Naive thymus-derived CD4-positive, alpha-beta T cell (primary cell): ENCODE measurements at regions of chr13 and their contacts with region 1.

Region 1: GRCh38 chr13:45847554-45848224 is 3.9 kb downstream of the SIAH3 start:
- DNase-seq: peak; percentile 15 to 83 (median 78)
- ATAC-seq: peak; percentile 79
- H3K4me3 ChIP-seq: peak overlapping the region; percentile 11
- H3K4me3 Mint-ChIP-seq: peak overlapping the region; percentile 61 to 89 (median 76)
- H3K27ac ChIP-seq: peak overlapping the region; percentile 19
- H3K27ac Mint-ChIP-seq: peak overlapping the region; percentile 14 to 98 (median 90)
- H3K4me1 ChIP-seq: peaks cover 29 to 45% of the 10 kb centered on the region in 2 donors
- H3K4me1 Mint-ChIP-seq: peaks cover 38 to 66% (median 61%) of the 10 kb centered on the region in 7 donors
- H3K27me3 ChIP-seq: no peaks in the 10 kb centered on the region
- H3K27me3 Mint-ChIP-seq: peaks cover 0 to 48% (median 5%) of the 10 kb centered on the region in 5 donors

Region 2: GRCh38 chr13:45895881-45896280 is 48.2 kb after region 1 on chr13:
- CTCF ChIA-PET with region 1: no interaction called
- POLR2A ChIA-PET with region 1: no interaction called
- intact Hi-C with region 1: no loop called
- DNase-seq: no peak
- ATAC-seq: no peak
- H3K4me3 ChIP-seq: no peak overlapping the region
- H3K4me3 Mint-ChIP-seq: no peak overlapping the region
- H3K27ac ChIP-seq: no peak overlapping the region
- H3K27ac Mint-ChIP-seq: no peak overlapping the region
- H3K4me1 ChIP-seq: no peaks in the 10 kb centered on the region
- H3K4me1 Mint-ChIP-seq: peaks cover 0 to 10% (median 2%) of the 10 kb centered on the region in 7 donors
- H3K27me3 ChIP-seq: peaks cover 0 to 2% of the 10 kb centered on the region in 2 donors
- H3K27me3 Mint-ChIP-seq: peaks cover 4 to 17% (median 8%) of the 10 kb centered on the region in 5 donors

Region 3: DNA sequence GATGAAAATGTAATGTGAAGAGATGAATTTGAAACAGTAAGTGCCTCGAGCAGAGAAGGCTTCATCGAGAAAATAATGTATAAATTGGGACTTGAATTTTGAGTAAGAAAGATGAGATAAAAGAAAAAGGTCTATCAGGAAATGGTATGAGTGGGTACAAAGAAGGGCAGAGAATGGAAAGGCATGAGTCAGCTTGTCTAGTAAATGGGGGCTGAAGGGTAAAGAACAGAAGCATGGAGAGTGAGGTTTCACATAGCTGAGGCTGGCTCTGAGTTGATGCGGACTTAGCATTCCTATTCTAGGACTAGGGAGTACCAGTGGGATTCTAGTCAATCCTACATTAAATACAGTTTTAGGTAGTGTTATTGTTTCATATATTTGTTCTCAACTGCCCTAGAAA is 119.0 kb after region 1 on chr13:
- CTCF ChIA-PET with region 1: no interaction called
- POLR2A ChIA-PET with region 1: no interaction called
- intact Hi-C with region 1: loop called in 1 of 2 experiments (anchors 5 kb)
- DNase-seq: no peak
- ATAC-seq: no peak
- H3K4me3 ChIP-seq: no peak overlapping the region
- H3K4me3 Mint-ChIP-seq: no peak overlapping the region
- H3K27ac ChIP-seq: no peak overlapping the region
- H3K27ac Mint-ChIP-seq: peak overlapping the region in 3 of 9 donors; percentile 9 to 12 (median 10)
- H3K4me1 ChIP-seq: no peaks in the 10 kb centered on the region
- H3K4me1 Mint-ChIP-seq: peaks cover 4 to 9% (median 7%) of the 10 kb centered on the region in 7 donors
- H3K27me3 ChIP-seq: no peaks in the 10 kb centered on the region
- H3K27me3 Mint-ChIP-seq: no peaks in the 10 kb centered on the region